GM13976 (cell line): ENCODE measurements at regions of chr16 and their contacts with region 1.

Region 1: GRCh38 chr16:67672739-67673662 is 6.4 kb downstream of the C16orf86 start:
- DNase-seq: peak; percentile 88
- CTCF ChIP-seq: peak; percentile 86

Region 2: GRCh38 chr16:67928561-67929364 is 255.8 kb after region 1 on chr16:
- in situ Hi-C with region 1: loop called (anchors 10 kb)
- DNase-seq: peak; percentile 92
- CTCF ChIP-seq: peak; percentile 83

Region 3: DNA sequence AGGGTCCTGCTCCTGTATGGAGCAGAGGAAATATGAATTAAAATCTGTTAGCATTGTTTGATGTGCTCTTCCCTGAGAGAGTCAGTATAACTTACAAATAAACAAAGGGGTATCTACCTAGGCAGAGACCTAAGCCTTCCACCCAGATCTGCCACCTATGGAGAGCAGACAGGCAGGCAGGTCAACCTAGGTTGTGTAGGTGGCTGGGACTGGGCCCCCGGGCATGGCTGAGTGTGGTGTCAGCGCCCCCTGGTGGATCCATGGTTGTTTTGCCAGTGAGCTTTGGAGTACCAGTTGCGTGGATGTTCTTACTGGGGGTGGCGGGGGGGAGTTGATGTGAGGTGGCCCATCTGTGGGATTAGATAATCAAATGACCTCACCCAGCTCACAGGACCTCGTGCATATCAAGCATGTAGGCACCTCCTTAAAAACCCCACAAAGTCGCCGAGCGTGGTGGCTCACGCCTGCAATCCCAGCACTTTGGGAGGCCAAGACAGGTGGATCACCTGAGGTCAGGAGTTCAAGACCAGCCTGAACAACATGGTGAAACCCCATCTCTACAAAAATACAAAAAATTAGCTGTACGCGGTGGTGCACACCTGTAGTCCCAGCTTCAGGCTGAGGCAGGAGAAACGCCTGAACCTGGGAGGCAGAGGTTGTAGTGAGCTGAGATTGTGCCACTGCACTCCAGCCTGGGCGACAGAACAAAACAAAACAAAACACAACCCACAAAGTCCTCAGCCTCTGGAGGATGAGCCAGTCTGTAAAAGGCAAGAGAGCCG is 367.7 kb after region 1 on chr16:
- in situ Hi-C with region 1: loop called (anchors 25 kb)
- DNase-seq: peak; percentile 84
- CTCF ChIP-seq: peak; percentile 89